HEK293 (cell line): ENCODE measurements at regions of chr10 and their contacts with region 1.

Region 1: DNA sequence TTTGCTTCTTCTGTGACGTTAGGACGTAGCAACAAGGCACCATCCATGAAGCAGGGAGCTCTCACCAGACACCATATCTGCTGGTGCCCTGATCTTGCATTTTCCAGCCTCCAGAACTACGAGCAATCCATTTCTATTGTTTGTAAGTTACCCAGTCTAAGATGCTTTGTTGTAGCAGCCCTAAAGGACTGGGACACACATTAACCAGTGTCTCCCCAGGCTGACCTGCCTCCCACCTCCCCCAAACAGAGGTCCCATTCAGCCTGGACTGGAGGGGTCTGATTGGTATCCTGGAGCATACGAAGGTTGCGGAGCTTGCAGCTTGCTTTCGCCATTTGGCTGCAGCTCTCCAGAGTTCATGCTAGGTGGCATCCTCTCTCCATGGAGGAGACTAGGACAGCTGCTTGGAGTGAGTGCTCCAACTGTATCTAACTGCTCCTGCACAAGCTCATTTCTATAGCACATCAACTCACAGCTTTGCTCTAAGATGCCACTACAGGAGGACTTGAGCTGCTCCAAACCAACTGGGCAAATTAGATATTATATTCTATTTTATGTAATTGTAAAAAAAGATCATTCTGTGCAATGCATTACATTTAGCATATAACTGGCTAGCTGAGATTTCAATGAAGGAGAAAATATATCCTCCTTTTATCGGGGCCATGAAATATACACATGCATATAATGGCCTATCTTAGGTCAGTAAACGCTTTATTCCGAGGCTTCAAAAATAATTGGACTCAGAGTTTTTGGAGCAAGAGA is 8.0 kb upstream of the GRK5 start:
- H3K4me3 ChIP-seq: no peak overlapping the region
- H3K27ac ChIP-seq: no peak overlapping the region
- H3K4me1 ChIP-seq: no peaks in the 10 kb centered on the region
- CTCF ChIP-seq: peak; percentile 87

Region 2: GRCh38 chr10:119058010-119058409 is 141.4 kb before region 1 on chr10:
- CTCF ChIA-PET with region 1: no interaction called
- POLR2A ChIA-PET with region 1: no interaction called
- H3K4me3 ChIP-seq: no peak overlapping the region
- H3K27ac ChIP-seq: no peak overlapping the region
- H3K4me1 ChIP-seq: no peaks in the 10 kb centered on the region
- CTCF ChIP-seq: no peak

Region 3: GRCh38 chr10:119364645-119365605 is 165.5 kb after region 1 on chr10:
- CTCF ChIA-PET with region 1: interaction called, 10 read pairs
- POLR2A ChIA-PET with region 1: no interaction called
- H3K4me3 ChIP-seq: no peak overlapping the region
- H3K27ac ChIP-seq: no peak overlapping the region
- H3K4me1 ChIP-seq: no peaks in the 10 kb centered on the region
- CTCF ChIP-seq: no peak

Region 4: DNA sequence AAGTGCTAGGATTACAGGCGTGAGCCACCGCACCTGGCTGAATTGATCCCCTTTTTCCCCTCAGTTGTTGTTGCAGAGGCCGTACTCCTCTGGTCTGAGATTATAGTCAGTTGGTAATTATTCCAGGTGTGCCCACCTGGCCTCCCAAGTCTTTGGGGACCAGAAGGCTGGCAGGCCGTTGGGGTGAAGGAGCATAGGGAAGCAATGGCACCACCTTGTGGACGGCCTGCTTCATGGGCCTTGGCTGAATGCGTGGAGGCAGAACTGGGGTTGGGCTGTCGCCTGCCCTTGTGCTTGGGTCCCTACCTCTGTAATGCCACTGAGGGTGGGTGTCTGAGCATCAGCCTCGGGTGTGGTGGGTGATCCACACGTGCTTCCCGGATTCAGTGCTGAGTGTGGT is 217.4 kb after region 1 on chr10:
- CTCF ChIA-PET with region 1: interaction called, 58 read pairs
- POLR2A ChIA-PET with region 1: no interaction called
- H3K4me3 ChIP-seq: no peak overlapping the region
- H3K27ac ChIP-seq: no peak overlapping the region
- H3K4me1 ChIP-seq: no peaks in the 10 kb centered on the region
- CTCF ChIP-seq: peak; percentile 80

Region 5: DNA sequence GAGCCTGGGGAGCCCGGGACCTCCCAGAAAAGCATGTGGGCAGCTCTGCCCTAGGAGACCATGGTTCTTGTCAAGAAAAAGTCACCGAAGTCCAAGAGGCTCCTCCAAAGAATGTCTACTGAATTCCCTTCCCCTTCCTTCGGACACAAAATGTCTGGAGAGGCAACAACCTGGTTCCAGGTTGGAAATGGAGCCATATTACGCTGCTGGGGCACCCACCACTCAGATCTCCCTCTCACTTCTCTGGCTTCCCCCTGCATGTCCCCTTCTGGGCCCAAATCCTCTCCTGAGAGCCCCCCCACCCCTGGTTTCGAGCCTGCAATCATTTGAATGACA is 290.5 kb after region 1 on chr10:
- CTCF ChIA-PET with region 1: interaction called, 29 read pairs
- POLR2A ChIA-PET with region 1: interaction called, 3 read pairs
- H3K4me3 ChIP-seq: no peak overlapping the region
- H3K27ac ChIP-seq: no peak overlapping the region
- H3K4me1 ChIP-seq: peaks cover 5% of the 10 kb centered on the region
- CTCF ChIP-seq: no peak

Region 6: DNA sequence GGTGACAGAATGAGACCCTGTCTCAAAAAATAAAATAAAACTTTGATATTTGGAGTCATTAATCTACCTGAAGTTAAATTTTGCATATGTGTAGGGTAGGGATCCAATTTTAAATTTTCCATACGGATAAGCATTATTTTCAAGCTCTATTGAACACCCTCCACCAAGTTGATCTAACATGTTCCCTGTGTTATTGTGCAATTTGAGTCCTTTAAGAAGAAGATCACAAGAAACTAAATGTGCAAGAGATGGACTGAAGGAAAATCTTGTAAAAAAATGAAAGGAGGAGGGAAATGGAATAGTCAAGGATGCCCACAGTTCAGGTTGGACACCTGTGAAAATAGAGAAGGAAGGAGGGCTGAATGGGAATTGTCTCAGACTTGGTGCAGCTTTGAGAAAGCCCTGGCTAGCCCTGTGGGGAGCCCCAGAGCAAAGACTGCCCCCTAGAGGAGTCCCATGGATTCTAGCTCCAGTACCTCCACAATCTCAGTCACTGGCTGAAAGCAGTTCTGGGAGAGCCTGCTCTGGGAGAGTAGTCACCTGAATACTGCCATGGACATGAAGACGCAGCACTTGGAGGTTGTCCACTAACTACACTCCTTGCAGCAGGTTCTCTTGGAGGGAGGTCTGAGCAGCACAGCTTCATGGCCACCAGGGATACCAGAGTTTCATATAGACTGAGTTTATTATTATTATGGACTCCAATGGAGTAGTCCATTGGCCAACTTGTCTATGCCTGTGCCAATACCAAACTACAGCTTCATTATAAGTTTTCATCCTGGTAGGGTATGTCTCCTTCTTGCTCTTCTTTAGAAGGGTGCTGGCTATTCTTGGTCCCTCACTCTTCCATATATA is 403.1 kb after region 1 on chr10:
- CTCF ChIA-PET with region 1: interaction called, 10 read pairs
- POLR2A ChIA-PET with region 1: no interaction called
- H3K4me3 ChIP-seq: no peak overlapping the region
- H3K27ac ChIP-seq: no peak overlapping the region
- H3K4me1 ChIP-seq: no peaks in the 10 kb centered on the region
- CTCF ChIP-seq: 0 out of 2 replicates have a peak, but pooled peaks have one; percentile 28